ENCODE measurements at regions of chr13 and their contacts with region 1.

Region 1: GRCh38 chr13:73810647-73811046 is 323.6 kb downstream of the KLF12 start:
- DNase-seq: no peak
- H3K4me3 ChIP-seq: no peak overlapping the region
- H3K27ac ChIP-seq: no peak overlapping the region
- H3K4me1 ChIP-seq: no peaks in the 10 kb centered on the region
- H3K27me3 ChIP-seq: no peaks in the 10 kb centered on the region
- CTCF ChIP-seq: no peak
- EP300 ChIP-seq: no peak
- POLR2A ChIP-seq: no peak

Region 2: DNA sequence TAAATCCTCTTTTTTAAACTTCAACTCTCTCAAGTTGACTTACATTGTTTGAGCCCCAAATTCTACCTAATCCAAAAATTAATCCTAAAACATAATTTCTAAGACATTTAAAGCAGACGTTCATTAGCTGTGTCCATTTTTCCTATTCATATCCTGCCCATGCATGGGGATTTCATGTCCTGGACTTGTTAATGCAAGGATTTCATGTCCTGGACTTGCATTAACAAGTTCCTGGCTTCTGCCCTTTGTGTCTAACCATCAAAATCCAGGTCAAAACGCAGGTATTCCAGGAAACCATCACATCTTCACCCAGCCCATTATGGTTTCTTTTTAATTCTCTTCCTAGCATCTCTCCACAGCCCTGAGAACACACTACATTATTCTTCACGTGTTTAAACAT is 296.9 kb before region 1 on chr13:
- intact Hi-C with region 1: no loop called
- DNase-seq: no peak
- H3K4me3 ChIP-seq: no peak overlapping the region
- H3K27ac ChIP-seq: no peak overlapping the region
- H3K4me1 ChIP-seq: no peaks in the 10 kb centered on the region
- H3K27me3 ChIP-seq: no peaks in the 10 kb centered on the region
- CTCF ChIP-seq: no peak
- EP300 ChIP-seq: no peak
- POLR2A ChIP-seq: no peak

Region 3: DNA sequence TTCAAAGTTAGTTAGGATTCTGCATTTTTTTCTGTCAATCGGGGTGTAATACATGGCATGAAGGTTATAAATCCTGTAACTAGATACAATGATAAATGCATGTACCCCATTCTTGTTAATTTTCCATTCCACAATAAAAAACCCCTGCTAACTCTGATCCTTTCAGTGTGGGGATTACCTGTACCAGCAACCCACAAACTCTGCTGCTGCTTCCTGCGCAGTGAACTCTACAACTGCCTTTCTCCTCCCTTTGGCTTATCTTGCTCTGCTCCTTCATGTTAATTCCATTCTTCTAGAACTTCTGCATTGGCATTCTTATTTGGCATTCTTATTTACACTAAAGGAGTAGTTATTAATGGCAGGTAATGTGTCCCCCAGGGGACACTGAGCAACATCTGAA is 50.5 kb after region 1 on chr13:
- intact Hi-C with region 1: loop called in 1 of 4 experiments (anchors 5 kb)
- DNase-seq: no peak
- H3K4me3 ChIP-seq: no peak overlapping the region
- H3K27ac ChIP-seq: no peak overlapping the region
- H3K4me1 ChIP-seq: no peaks in the 10 kb centered on the region
- H3K27me3 ChIP-seq: no peaks in the 10 kb centered on the region
- CTCF ChIP-seq: no peak
- EP300 ChIP-seq: no peak
- POLR2A ChIP-seq: no peak